ENCODE measurements at regions of chr15 and their contacts with region 1.

Region 1: DNA sequence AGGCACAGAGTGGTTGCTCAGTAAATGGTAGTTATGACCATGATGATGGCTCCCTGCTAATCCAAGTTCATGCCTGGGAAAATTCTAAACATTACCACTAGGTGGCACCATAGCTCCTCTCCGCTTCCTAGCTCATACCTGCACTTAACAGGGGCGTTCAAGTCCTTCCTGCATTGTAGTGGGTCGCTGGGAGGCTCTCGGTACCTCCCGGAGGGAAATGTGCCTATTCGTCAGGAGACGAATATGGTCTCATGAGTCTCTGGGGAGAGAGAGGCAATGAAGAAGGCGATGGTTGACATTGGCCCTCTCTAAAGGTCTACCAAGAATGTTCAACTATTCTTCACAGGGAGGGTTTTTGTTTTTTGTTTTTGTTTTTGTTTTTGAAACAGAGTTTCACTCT is 10.9 kb downstream of the MESP1 start:
- DNase-seq: peak; percentile 61 to 64
- H3K4me3 ChIP-seq: no peak overlapping the region
- H3K27ac ChIP-seq: no peak overlapping the region
- H3K4me1 ChIP-seq: no peaks in the 10 kb centered on the region
- H3K27me3 ChIP-seq: no peaks in the 10 kb centered on the region
- CTCF ChIP-seq: peak; percentile 94

Region 2: DNA sequence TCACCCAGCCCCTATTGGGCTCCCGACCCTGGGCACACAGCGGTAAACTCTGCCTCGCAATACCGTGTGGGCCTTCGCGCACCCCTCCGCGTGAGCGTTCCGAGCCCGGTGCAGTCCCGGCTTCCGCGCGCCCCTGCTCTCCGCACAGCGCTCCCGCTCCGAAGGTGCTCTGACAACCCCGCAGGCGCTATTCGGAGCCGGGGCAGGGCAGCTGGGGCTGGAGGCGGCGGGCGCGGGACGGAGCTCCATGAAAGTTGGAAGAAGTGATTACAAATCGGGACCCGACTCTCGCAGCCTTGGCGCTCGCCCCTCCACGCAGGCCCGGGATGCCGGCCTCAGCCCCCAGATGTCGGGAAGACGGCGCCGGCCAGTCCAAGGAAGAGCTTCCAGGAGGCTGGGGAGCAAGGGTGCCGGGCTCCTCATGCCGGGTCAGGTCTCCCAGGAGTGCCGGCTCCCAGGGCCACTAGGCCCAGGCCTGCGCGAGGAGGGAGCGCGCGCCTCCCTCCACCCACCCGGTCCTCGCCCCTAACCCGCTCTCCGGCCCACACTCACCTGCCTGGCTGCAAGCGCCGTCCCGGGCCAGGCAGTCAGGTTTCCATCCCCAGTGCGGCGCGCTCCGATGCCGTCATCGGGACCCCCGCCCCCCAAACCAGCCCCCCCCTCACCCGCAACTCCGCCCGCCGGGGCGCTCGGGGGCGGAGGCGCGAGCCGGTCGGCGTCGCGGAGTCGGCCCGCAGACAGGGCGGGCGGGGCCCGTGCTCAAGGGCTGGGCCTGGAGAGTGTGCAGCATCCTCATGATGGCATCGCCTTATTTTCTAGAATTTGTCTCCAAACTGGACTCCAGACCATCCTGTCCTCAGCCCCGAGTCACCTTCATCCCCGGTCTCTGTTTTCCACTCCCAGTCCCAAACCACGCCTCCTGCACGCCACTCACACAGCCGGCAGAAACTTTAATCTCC is 85.0 kb before region 1 on chr15 and contains the start of gene KIF7:
- CTCF ChIA-PET with region 1: no interaction called
- POLR2A ChIA-PET with region 1: no interaction called
- intact Hi-C with region 1: loop called (anchors 5 kb)
- DNase-seq: peak; percentile 39 to 44
- H3K4me3 ChIP-seq: peak within 1 kb of the TSS; percentile 96
- H3K27ac ChIP-seq: peak within 1 kb of the TSS; percentile 12; the same call in 1 of the 2 replicates
- H3K4me1 ChIP-seq: peaks cover 9% of the 10 kb centered on the region
- H3K27me3 ChIP-seq: no peaks in the 10 kb centered on the region
- CTCF ChIP-seq: no peak
- total RNA-seq, gene KIF7: 13.3 and 15.7 TPM in 2 replicates

Region 3: GRCh38 chr15:89874926-89875564 is 134.9 kb after region 1 on chr15:
- CTCF ChIA-PET with region 1: interaction called, 16 read pairs
- POLR2A ChIA-PET with region 1: interaction called, 6 read pairs
- intact Hi-C with region 1: loop called (anchors 1 kb)
- DNase-seq: peak; percentile 55 to 77
- H3K4me3 ChIP-seq: no peak overlapping the region
- H3K27ac ChIP-seq: peak overlapping the region; percentile 22; the same call in 1 of the 2 replicates
- H3K4me1 ChIP-seq: no peaks in the 10 kb centered on the region
- H3K27me3 ChIP-seq: no peaks in the 10 kb centered on the region
- CTCF ChIP-seq: peak; percentile 95

Region 4: GRCh38 chr15:89888214-89888804 is 148.2 kb after region 1 on chr15:
- CTCF ChIA-PET with region 1: interaction called, 10 read pairs
- POLR2A ChIA-PET with region 1: no interaction called
- intact Hi-C with region 1: loop called (anchors 1 kb)
- DNase-seq: peak; percentile 32 to 60
- H3K4me3 ChIP-seq: no peak overlapping the region
- H3K27ac ChIP-seq: no peak overlapping the region
- H3K4me1 ChIP-seq: peaks cover 14% of the 10 kb centered on the region
- H3K27me3 ChIP-seq: no peaks in the 10 kb centered on the region
- CTCF ChIP-seq: peak; percentile 67

Region 5: GRCh38 chr15:89910891-89911626 is 170.9 kb after region 1 on chr15:
- CTCF ChIA-PET with region 1: no interaction called
- POLR2A ChIA-PET with region 1: no interaction called
- intact Hi-C with region 1: no loop called
- DNase-seq: no peak
- H3K4me3 ChIP-seq: peak overlapping the region; percentile 96; the same call in 1 of the 2 replicates
- H3K27ac ChIP-seq: no peak overlapping the region
- H3K4me1 ChIP-seq: peaks cover 42% of the 10 kb centered on the region
- H3K27me3 ChIP-seq: no peaks in the 10 kb centered on the region
- CTCF ChIP-seq: no peak

Region 6: GRCh38 chr15:90086868-90087268 is 346.7 kb after region 1 on chr15:
- CTCF ChIA-PET with region 1: no interaction called
- POLR2A ChIA-PET with region 1: no interaction called
- intact Hi-C with region 1: loop called (anchors 5 kb)
- DNase-seq: peak in 1 of 2 experiments; percentile 47
- H3K4me3 ChIP-seq: no peak overlapping the region
- H3K27ac ChIP-seq: no peak overlapping the region
- H3K4me1 ChIP-seq: no peaks in the 10 kb centered on the region
- H3K27me3 ChIP-seq: no peaks in the 10 kb centered on the region
- CTCF ChIP-seq: peak; percentile 84

Measured in PC-9 (cell line).